ENCODE measurements at regions of chr20 and their contacts with region 1.

Region 1: DNA sequence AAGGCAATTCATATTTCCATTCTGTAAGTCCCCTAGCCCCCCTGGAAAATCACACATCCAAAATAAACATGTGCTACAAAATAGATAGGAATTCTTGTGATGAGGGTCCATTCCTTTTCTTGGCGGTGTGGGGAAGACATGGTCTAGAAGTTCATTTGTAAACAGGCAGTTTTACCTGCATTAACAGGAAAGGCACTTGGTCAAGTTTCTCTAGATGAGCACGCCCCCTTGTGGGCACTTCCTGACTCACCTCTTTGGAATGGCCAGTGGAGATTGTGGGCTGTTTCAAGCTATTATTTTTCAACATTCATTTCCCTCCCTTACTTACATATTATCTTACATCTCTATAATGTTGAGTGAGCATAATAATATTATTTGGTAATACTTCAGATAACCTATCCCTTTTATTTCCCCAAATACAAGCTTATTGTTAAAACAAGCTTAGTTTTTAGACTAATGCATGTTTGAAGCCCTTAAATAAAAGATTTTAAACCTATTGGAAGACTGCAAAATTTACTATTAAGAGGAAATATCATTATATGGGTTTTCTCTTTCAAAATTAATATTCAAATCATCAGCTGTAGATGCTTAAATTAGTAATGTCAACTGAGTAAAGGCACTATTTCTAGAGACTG is 92.1 kb downstream of the TASP1 start:
- DNase-seq: peak; percentile 72
- H3K4me3 ChIP-seq: no peak overlapping the region
- H3K27ac ChIP-seq: no peak overlapping the region
- H3K4me1 ChIP-seq: no peaks in the 10 kb centered on the region
- H3K27me3 ChIP-seq: no peaks in the 10 kb centered on the region
- CTCF ChIP-seq: peak; percentile 79
- POLR2A ChIP-seq: no peak

Region 2: DNA sequence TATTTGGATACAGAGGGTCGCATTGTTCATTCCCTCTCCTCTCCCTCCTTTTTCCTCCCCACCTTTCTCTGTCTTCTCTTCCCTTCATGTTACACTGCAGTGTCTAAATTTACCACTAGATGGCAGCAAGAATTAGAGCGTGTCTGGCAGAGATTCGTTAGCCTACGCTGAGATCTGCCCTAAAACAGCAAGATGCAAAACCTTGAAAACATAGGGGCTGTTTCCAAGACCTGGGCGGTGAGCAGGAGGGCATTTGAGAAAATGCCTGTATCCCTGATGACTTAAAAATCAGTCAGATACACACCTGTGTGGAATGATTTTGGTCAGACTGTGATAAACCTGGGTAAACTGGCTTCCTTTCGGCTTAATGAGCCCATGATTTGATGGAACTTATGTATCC is 427.0 kb before region 1 on chr20:
- CTCF ChIA-PET with region 1: interaction called, 33 read pairs
- POLR2A ChIA-PET with region 1: no interaction called
- dilution Hi-C with region 1: no loop called
- intact Hi-C with region 1: loop called (anchors 1 kb)
- DNase-seq: peak; percentile 64
- H3K4me3 ChIP-seq: no peak overlapping the region
- H3K27ac ChIP-seq: no peak overlapping the region
- H3K4me1 ChIP-seq: no peaks in the 10 kb centered on the region
- H3K27me3 ChIP-seq: no peaks in the 10 kb centered on the region
- CTCF ChIP-seq: peak; percentile 68 to 76
- POLR2A ChIP-seq: no peak

Region 3: DNA sequence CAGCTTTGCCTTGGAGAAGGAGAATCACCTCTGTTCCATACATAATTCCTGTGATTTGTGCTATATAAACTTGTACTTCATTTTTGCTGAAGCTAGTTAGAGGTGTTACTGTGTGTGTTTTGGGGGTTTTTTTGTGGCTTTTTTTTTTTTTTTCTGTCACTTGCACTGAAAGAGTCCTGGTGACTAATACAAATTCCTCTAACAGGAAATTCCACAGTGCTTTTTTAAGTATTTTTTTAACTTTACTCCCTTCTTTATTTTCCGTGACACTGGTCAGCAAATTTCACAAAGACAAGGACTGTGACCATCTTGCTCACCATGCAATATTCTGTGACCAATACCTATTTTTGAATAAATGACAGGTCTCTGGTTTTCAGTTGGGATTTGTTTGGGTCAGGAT is 215.1 kb before region 1 on chr20:
- CTCF ChIA-PET with region 1: interaction called, 12 read pairs
- POLR2A ChIA-PET with region 1: no interaction called
- dilution Hi-C with region 1: no loop called
- intact Hi-C with region 1: no loop called
- DNase-seq: peak; percentile 50
- H3K4me3 ChIP-seq: no peak overlapping the region
- H3K27ac ChIP-seq: no peak overlapping the region
- H3K4me1 ChIP-seq: peaks cover 12% of the 10 kb centered on the region
- H3K27me3 ChIP-seq: no peaks in the 10 kb centered on the region
- CTCF ChIP-seq: no peak
- POLR2A ChIP-seq: no peak

Region 4: DNA sequence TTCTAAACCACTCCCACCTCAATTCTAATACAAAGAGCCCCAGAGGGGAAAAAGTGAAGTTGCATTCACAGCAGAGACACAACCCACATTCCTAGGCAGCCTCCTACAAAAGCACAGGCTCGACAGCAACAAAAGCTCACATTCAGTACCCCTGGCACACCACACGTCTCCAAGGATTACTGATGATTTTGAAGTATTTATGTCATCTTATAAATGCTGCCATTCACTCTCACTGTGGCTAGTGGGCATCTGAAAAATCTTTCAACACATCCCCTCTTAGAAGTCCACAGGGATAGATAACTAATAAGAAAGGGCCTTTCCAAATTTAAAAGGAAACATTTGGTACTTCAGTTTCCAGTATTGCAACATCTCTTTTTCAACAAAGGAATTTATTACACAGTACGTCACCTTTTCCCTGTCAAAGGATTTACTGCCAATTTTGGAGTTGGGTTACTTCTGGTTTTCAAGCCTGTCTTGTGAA is 54.6 kb before region 1 on chr20:
- CTCF ChIA-PET with region 1: interaction called, 19 read pairs
- POLR2A ChIA-PET with region 1: no interaction called
- dilution Hi-C with region 1: no loop called
- intact Hi-C with region 1: no loop called
- DNase-seq: no peak
- H3K4me3 ChIP-seq: no peak overlapping the region
- H3K27ac ChIP-seq: no peak overlapping the region
- H3K4me1 ChIP-seq: no peaks in the 10 kb centered on the region
- H3K27me3 ChIP-seq: no peaks in the 10 kb centered on the region
- CTCF ChIP-seq: no peak
- POLR2A ChIP-seq: no peak

Region 5: DNA sequence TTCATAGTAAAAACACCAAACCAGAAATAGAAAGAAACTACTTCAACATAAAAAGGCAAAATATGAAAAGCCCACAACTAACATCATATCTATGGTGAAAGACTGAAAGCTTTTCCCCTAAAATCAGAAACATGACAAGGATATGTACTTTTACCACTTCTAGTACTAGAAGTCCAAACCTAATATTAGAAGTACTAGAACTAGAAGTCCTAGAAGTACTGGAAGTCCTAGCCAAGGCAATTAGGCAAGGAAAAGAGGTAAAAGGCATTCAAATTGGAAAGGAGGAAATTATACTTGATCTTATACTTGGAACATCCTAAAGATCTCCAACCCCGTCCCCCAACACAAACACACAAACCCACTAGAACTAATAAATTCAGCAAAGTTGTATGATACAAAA is 17.2 kb after region 1 on chr20:
- CTCF ChIA-PET with region 1: interaction called, 62 read pairs
- POLR2A ChIA-PET with region 1: no interaction called
- dilution Hi-C with region 1: no loop called
- intact Hi-C with region 1: no loop called
- DNase-seq: no peak
- H3K4me3 ChIP-seq: no peak overlapping the region
- H3K27ac ChIP-seq: no peak overlapping the region
- H3K4me1 ChIP-seq: no peaks in the 10 kb centered on the region
- H3K27me3 ChIP-seq: no peaks in the 10 kb centered on the region
- CTCF ChIP-seq: no peak
- POLR2A ChIP-seq: no peak

Region 6: DNA sequence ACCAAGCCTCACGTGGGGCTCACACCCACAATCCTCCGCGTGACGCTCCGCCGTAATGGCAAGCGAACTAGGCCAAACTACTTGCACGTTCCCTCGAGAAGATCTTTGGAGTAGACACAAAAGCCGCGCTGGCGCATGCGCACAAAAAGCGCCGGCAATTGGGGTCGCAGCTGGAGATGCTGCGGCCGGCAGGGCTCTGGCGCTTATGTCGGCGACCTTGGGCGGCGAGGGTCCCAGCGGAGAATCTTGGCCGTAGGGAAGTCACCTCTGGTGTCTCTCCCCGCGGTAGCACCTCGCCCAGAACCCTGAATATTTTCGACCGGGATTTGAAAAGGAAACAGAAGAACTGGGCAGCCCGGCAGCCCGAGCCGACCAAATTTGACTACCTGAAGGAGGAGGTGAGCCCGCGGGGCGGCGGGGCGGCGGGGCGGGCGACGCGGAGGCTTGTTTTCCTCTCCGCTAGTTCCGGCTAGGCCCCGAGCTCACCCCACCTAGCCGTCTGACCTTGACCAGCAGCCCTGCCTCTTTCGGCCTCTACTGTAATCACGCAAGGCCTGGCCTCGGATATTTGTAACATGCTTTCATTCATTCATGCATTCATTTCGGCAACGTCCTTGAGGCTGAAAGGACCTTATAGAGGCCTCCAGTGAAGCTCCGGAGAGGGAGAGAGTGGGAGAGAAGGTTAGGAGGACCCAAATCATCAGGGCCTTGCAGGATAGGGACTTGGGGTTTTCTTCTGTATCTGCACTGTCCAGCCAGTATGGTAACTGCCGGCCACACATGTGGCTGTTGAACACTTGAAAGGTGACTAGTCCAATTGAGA is 238.5 kb after region 1 on chr20 and contains the starts of genes ESF1 and NDUFAF5:
- CTCF ChIA-PET with region 1: interaction called, 12 read pairs
- POLR2A ChIA-PET with region 1: no interaction called
- dilution Hi-C with region 1: no loop called
- intact Hi-C with region 1: no loop called
- DNase-seq: peak; percentile 98
- H3K4me3 ChIP-seq: peak within 1 kb of the TSS; percentile 68 to 96 (median 83)
- H3K27ac ChIP-seq: peak within 1 kb of the TSS; percentile 60
- H3K4me1 ChIP-seq: peaks cover 16% of the 10 kb centered on the region
- H3K27me3 ChIP-seq: no peaks in the 10 kb centered on the region
- CTCF ChIP-seq: no peak
- POLR2A ChIP-seq: no peak
- total RNA-seq, gene ESF1: 15.2 and 15.5 TPM in 2 replicates
- total RNA-seq, gene NDUFAF5: 26.4 and 28.4 TPM in 2 replicates

Region 7: GRCh38 chr20:13891575-13891974 is 345.0 kb after region 1 on chr20:
- CTCF ChIA-PET with region 1: no interaction called
- POLR2A ChIA-PET with region 1: no interaction called
- dilution Hi-C with region 1: no loop called
- intact Hi-C with region 1: no loop called
- DNase-seq: no peak
- H3K4me3 ChIP-seq: no peak overlapping the region
- H3K27ac ChIP-seq: no peak overlapping the region
- H3K4me1 ChIP-seq: no peaks in the 10 kb centered on the region
- H3K27me3 ChIP-seq: no peaks in the 10 kb centered on the region
- CTCF ChIP-seq: no peak
- POLR2A ChIP-seq: no peak